ENCODE measurements at regions of chr12 and their contacts with region 1.

Region 1: DNA sequence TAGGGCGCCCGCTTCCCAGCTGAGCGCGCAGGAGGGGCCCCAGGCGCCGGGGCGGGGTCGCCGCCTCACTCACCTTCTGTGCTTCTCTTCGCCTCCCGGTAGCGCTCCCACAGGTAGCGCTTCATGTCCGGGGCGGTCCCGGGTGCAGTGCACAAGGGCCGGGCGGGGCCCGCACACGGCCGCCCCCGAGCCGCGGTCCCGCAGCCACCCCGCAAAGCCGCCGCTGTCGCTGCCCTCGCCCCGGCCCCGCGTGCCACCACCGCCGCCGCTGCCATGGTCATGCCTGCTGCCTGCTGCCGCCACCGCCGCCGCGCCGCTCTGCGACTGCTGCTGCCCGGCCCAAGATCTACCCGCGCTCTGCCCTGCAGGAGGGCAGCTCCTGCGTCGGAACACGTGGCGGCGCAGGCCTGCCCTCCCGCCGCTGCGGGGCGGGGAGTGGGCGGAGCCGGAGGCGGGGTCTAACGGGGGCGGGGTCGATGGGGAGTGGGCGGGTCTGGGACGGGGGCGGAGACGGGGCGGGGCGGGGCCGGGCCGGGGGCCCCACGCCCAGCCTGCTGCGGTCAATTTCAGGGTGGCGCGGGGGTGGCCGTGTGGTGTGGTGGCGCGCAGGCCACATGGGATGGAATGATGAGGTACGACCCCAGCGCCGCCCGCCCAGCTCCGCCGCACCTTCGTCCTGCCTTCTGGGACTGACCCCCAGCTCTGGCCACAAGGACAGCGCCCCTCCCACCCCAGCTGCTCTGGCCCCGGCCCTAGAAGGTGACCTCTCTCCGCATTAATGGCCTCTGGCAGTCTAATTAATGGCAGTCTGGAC is at the start of gene NT5DC3:
- DNase-seq: peak; percentile 88 to 95
- ATAC-seq: peak; percentile 95
- H3K4me3 ChIP-seq: peak within 1 kb of the TSS; percentile 96 to 97
- H3K27ac ChIP-seq: peak within 1 kb of the TSS; percentile 78 to 88
- H3K4me1 ChIP-seq: no peaks in the 10 kb centered on the region
- H3K27me3 ChIP-seq: no peaks in the 10 kb centered on the region
- total RNA-seq, gene NT5DC3: 28.1 to 104 TPM

Region 2: DNA sequence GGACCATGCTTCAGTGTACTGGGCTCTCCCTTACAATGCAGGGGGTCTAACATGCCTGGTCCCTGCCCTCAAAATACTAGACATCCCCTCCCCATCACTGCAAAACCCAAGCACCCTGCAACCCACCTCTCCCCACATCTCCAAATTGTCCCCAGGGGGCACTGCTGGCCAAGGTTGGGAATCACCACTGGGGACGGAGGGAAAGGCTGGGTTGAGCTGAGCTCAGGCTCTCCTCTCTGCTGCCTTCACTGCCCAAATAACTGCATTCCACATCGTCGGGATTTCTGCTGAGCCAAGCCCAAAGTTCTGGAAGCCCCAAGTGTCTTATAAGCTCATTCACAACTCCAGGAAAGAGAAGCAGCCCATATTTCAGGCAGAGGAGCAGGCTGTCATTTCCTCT is 69.6 kb before region 1 on chr12:
- intact Hi-C with region 1: loop called in 1 of 2 experiments (anchors 5 kb)
- DNase-seq: no peak
- ATAC-seq: peak; percentile 80
- H3K4me3 ChIP-seq: no peak overlapping the region
- H3K27ac ChIP-seq: no peak overlapping the region
- H3K4me1 ChIP-seq: no peaks in the 10 kb centered on the region
- H3K27me3 ChIP-seq: no peaks in the 10 kb centered on the region

Region 3: GRCh38 chr12:103799870-103800771 is 41.0 kb before region 1 on chr12:
- intact Hi-C with region 1: loop called in 1 of 2 experiments (anchors 5 kb)
- DNase-seq: peak; percentile 81 to 85
- ATAC-seq: peak; percentile 84
- H3K4me3 ChIP-seq: no peak overlapping the region
- H3K27ac ChIP-seq: peak overlapping the region; percentile 12 to 72
- H3K4me1 ChIP-seq: peaks cover 0 to 2% of the 10 kb centered on the region in 2 donors
- H3K27me3 ChIP-seq: no peaks in the 10 kb centered on the region

Region 4: GRCh38 chr12:103901518-103902173 is 60.6 kb after region 1 on chr12:
- intact Hi-C with region 1: no loop called
- DNase-seq: no peak
- ATAC-seq: no peak
- H3K4me3 ChIP-seq: no peak overlapping the region
- H3K27ac ChIP-seq: no peak overlapping the region
- H3K4me1 ChIP-seq: no peaks in the 10 kb centered on the region
- H3K27me3 ChIP-seq: no peaks in the 10 kb centered on the region